ENCODE measurements at regions of chr5 and their contacts with region 1.

Region 1: DNA sequence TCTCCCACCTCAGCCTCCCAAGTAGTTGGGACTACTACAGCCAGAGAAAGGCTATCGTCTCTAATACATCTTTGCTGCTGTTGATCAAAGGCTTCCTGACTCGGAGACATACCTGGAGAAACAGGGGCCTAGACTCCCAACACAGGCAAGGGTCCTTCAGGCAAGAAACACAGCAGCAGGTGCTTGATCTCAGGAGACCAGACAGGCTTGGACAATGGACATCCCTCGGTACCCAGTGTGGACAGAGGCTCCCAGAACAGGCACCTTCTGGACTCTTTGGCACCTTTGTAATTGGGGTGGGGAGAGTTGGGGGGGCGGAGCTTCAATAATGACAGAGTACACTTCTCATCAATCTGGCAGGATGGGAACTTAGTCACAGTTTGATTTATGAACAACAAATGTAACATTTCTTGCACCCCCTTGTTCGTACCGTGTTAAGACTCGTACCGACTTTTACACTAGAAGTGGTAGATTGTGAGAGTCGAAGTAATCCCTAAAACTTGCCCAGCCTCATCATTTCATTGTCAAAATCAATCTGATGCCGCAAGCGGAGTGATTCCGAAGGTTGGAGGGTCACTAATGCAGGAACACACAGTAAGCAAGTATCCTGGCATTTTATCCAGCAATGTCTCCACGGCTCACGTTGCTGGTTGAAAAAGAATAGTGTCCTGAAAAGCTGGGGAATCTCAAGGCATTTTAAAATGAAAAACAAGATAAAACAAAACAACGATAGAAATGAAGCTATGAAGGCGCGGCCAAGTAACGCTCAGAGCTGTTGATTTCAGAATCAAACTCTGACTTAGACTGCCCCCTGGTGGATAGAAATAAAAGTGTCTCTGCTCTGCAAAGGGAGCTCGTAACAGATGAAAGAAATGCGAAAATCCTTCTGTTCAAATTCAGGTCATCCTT is 46.4 kb upstream of the STK32A start:
- DNase-seq: peak; percentile 75
- ATAC-seq: peak; percentile 85
- H3K4me3 ChIP-seq: peak overlapping the region; percentile 68
- H3K27ac ChIP-seq: no peak overlapping the region
- H3K4me1 ChIP-seq: no peaks in the 10 kb centered on the region
- H3K27me3 ChIP-seq: peaks cover 24% of the 10 kb centered on the region
- CTCF ChIP-seq: peak; percentile 79

Region 2: GRCh38 chr5:146971401-146971800 is 217.1 kb before region 1 on chr5:
- CTCF ChIA-PET with region 1: no interaction called
- POLR2A ChIA-PET with region 1: no interaction called
- intact Hi-C with region 1: loop called (anchors 5 kb)
- DNase-seq: no peak
- ATAC-seq: no peak
- H3K4me3 ChIP-seq: no peak overlapping the region
- H3K27ac ChIP-seq: no peak overlapping the region
- H3K4me1 ChIP-seq: no peaks in the 10 kb centered on the region
- H3K27me3 ChIP-seq: peaks cover 32% of the 10 kb centered on the region; the same call in 1 of the 2 replicates
- CTCF ChIP-seq: no peak

Region 3: DNA sequence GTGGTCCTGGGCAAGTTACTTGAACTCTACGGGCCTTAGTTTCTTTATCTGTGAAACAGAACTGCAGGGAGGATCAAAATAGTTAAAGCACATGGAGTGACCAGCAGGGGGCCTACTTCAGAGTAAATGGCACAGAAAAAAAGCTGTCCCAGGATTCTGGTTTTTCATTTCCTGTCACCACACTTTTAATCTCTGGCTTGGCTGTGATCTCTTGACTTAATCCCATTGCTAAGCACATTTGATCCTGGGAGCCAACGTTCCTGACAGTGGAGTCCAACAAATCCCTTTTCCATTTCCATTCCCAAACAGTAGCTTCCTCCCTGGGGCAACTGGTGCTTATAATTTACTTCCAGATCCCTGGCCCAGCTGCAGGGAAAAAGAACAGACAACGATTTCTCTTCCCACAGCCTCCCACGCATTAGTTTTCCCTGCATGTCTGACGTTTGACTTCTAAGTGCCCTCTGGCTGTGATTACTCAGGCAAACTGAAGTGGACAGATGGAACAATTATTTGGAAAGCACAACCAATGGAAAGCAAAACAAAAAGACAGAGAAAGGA is 90.1 kb before region 1 on chr5:
- CTCF ChIA-PET with region 1: interaction called, 7 read pairs
- POLR2A ChIA-PET with region 1: no interaction called
- intact Hi-C with region 1: loop called (anchors 1 kb)
- DNase-seq: peak; percentile 42
- ATAC-seq: no peak
- H3K4me3 ChIP-seq: no peak overlapping the region
- H3K27ac ChIP-seq: no peak overlapping the region
- H3K4me1 ChIP-seq: no peaks in the 10 kb centered on the region
- H3K27me3 ChIP-seq: peaks cover 36% of the 10 kb centered on the region
- CTCF ChIP-seq: peak; percentile 62

Region 4: GRCh38 chr5:147140558-147140957 is 47.9 kb before region 1 on chr5:
- CTCF ChIA-PET with region 1: no interaction called
- POLR2A ChIA-PET with region 1: no interaction called
- intact Hi-C with region 1: no loop called
- DNase-seq: no peak
- ATAC-seq: no peak
- H3K4me3 ChIP-seq: no peak overlapping the region
- H3K27ac ChIP-seq: no peak overlapping the region
- H3K4me1 ChIP-seq: no peaks in the 10 kb centered on the region
- H3K27me3 ChIP-seq: no peaks in the 10 kb centered on the region
- CTCF ChIP-seq: no peak

Measured in PC-3 (cell line).